OCI-LY7 (cell line): ENCODE measurements at regions of chr7 and their contacts with region 1.

Region 1: GRCh38 chr7:87159538-87159937 is 7.3 kb downstream of the DMTF1 start:
- DNase-seq: peak; percentile 16
- H3K4me3 ChIP-seq: peak overlapping the region; percentile 5
- H3K27ac ChIP-seq: peak overlapping the region; percentile 14
- H3K4me1 ChIP-seq: peaks cover 56% of the 10 kb centered on the region
- CTCF ChIP-seq: no peak

Region 2: GRCh38 chr7:87173471-87173870 is 13.9 kb after region 1 on chr7:
- CTCF ChIA-PET with region 1: interaction called, 5 read pairs
- POLR2A ChIA-PET with region 1: interaction called, 137 read pairs
- intact Hi-C with region 1: no loop called
- DNase-seq: no peak
- H3K4me3 ChIP-seq: no peak overlapping the region
- H3K27ac ChIP-seq: no peak overlapping the region
- H3K4me1 ChIP-seq: no peaks in the 10 kb centered on the region
- CTCF ChIP-seq: no peak

Region 3: DNA sequence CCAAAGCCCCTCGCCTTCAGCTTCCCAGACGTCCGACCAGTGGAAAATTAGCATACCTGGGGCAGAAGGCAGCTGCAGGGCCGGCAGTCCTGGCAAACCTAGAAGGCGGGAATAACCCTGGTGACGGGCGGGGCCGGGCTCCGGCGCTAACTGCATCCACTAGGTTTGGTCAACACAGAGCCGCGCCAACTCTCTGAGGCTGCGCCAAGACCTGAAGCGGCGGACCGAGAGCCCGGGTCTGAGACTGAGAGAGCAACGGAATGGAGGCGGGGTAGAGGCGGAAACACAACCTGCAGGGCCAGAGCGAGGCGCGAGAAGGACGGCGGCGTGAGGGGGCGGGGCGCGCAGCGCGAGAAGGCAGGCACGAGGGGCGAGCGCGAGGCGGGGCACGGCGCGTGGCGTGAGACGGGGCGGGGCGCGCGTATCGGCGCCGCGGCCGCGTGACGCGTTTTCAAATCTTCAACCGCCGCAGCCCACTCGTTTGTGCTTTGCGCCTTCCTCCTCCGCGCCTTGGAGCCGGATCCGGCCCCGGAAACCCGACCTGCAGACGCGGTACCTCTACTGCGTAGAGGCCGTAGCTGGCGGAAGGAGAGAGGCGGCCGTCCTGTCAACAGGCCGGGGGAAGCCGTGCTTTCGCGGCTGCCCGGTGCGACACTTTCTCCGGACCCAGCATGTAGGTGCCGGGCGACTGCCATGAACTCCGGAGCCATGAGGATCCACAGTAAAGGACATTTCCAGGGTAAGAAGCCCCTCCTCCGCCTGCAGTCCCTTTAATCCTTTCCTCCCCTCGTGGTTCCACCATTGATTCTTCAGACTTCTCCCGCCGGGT is 716.7 kb after region 1 on chr7 and contains the starts of genes DBF4 and SLC25A40:
- CTCF ChIA-PET with region 1: no interaction called
- POLR2A ChIA-PET with region 1: no interaction called
- intact Hi-C with region 1: loop called (anchors 5 kb)
- DNase-seq: peak; percentile 96
- H3K4me3 ChIP-seq: peak within 1 kb of the TSS; percentile 94
- H3K27ac ChIP-seq: peak within 1 kb of the TSS; percentile 99
- H3K4me1 ChIP-seq: peaks cover 29% of the 10 kb centered on the region
- CTCF ChIP-seq: no peak
- total RNA-seq, gene DBF4: 83.9 and 99.2 TPM in 2 replicates
- total RNA-seq, gene SLC25A40: 21.0 and 22.0 TPM in 2 replicates